AG04450 (cell line): ENCODE measurements at regions of chr3 and their contacts with region 1.

Region 1: DNA sequence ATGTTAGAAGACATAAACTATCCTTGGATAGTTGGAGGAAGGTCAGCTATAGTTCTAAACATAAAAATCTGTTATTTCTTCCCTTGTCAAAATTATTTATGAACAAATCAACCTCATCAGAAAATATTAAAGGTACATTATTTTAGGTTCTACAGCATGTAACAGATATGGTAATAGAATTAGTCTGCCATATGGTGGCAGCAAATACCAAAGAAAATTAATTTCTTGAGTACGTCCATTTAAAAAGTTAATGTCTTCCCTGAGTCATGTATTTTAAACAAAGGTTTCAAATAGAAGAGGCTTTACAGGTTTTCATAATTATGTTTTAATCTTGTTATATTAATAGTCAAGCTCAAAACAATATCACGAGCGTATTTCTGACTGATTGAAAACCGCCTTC is 17.9 kb upstream of the ANKRD28 start:
- DNase-seq: peak; percentile 54
- H3K4me3 ChIP-seq: no peak overlapping the region
- H3K27ac ChIP-seq: no peak overlapping the region
- H3K27me3 ChIP-seq: no peaks in the 10 kb centered on the region
- CTCF ChIP-seq: peak; percentile 54

Region 2: DNA sequence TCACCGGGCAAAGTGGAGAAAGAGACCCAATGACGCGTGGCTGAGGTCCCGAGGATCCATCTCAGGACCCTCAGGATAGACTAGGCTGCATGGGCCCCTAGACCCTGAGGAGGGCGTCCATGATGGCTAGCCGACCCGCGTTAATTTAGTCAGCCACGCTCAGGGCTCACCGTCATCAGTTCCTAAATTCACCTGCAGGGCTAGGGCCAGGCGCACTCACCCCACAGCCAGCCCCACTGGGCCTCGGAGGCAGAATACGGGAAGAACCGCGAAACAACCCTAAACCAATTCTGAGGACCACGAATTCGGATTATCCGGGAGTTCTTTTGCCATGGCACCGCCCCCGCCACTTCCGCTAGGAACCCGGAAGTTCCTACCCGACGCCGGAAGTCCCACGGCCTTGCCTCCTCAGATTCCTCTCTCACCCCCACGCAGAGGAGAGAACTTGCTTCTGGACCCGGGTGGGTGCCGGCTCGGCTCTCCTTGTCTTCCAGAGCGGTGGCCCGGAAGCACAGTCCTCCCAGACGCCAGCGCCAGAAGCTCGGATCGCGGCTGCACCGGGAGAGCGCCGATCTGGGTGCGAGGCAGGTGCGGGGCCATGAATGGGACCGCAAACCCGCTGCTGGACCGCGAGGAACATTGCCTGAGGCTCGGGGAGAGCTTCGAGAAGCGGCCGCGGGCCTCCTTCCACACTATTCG is 388.4 kb before region 1 on chr3 and contains the starts of genes EAF1 and METTL6:
- CTCF ChIA-PET with region 1: no interaction called
- POLR2A ChIA-PET with region 1: no interaction called
- DNase-seq: peak; percentile 37
- H3K4me3 ChIP-seq: peak within 1 kb of the TSS; percentile 95
- H3K27ac ChIP-seq: peak within 1 kb of the TSS; percentile 73
- H3K27me3 ChIP-seq: no peaks in the 10 kb centered on the region
- CTCF ChIP-seq: peak; percentile 32
- polyA plus RNA-seq, gene EAF1: 9.7 and 11.0 TPM in 2 replicates
- polyA plus RNA-seq, gene METTL6: 23.0 and 25.9 TPM in 2 replicates

Region 3: DNA sequence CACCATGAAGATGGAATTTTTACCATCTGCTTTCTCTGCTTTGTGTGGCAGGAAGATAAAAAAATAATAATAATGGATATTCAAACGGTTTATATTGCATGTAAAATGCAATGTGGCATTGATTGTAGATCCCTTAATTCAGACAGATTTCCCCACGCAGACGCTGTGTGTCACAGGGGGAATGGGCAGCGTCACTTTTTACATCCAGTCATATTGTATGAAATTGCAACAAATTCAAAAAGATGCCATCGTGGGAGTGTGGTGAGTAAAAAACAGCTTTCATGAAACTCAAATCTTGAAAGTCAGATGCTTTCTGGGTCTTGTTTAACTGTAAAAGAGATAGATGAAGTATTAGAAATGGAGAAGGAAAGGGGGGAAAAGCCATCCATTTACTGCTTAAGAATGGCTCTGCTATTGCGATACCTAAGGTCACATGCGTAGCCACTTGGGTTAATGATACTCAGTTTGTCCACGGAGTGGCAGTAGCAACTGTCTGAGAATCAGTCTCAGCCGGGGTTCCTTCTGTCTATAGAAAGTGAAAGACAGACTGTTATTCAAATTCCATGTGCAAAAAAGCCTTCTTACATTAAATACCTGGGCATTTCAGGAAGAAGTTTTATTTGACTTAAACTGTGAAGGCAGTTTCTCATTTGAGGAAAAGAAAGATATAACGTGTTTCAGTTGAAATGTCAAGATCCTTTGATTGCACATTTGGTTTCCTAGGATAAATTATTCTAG is 185.7 kb before region 1 on chr3:
- CTCF ChIA-PET with region 1: interaction called, 75 read pairs
- POLR2A ChIA-PET with region 1: no interaction called
- DNase-seq: no peak
- H3K4me3 ChIP-seq: peak overlapping the region; percentile 50
- H3K27ac ChIP-seq: no peak overlapping the region
- H3K27me3 ChIP-seq: no peaks in the 10 kb centered on the region
- CTCF ChIP-seq: peak; percentile 65

Region 4: GRCh38 chr3:15797642-15798303 is 17.9 kb before region 1 on chr3 and contains the start of gene ANKRD28:
- CTCF ChIA-PET with region 1: interaction called, 17 read pairs
- POLR2A ChIA-PET with region 1: no interaction called
- DNase-seq: peak; percentile 92
- H3K4me3 ChIP-seq: peak within 1 kb of the TSS; percentile 71
- H3K27ac ChIP-seq: peak within 1 kb of the TSS; percentile 96
- H3K27me3 ChIP-seq: no peaks in the 10 kb centered on the region
- CTCF ChIP-seq: peak; percentile 42
- polyA plus RNA-seq, gene ANKRD28: 114 and 134 TPM in 2 replicates

Region 5: DNA sequence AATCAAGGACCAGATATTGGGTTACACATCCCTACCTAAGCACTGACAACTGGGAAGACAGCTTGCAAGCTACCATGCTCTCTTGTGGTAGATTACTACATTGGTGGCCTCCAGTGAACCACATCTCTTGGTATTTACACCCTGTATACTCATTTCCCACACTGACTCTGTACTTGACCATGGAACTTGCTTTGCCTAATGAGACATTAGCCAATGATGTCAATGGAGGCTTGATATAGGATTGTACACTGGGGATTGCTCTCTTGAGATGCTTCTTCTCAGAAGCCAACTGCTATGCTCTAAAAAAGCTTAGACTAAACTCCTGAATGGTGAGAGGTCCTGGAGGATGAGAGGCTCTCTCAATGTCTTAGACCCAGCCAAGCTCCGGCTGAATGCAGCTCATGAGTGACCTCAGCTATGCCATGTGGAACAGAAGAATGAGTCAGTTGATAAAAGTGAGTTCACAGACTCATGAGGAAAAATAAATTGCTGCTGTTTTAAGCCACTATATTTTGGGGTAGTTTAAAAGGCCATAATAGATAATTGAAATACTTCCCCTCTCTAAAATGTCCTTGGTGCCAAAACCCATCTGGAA is 297.3 kb after region 1 on chr3:
- CTCF ChIA-PET with region 1: no interaction called
- POLR2A ChIA-PET with region 1: no interaction called
- DNase-seq: no peak
- H3K4me3 ChIP-seq: no peak overlapping the region
- H3K27ac ChIP-seq: peak overlapping the region; percentile 63
- H3K27me3 ChIP-seq: no peaks in the 10 kb centered on the region
- CTCF ChIP-seq: no peak

Region 6: GRCh38 chr3:16247276-16248061 is 431.8 kb after region 1 on chr3:
- CTCF ChIA-PET with region 1: interaction called, 24 read pairs
- POLR2A ChIA-PET with region 1: interaction called, 4 read pairs
- DNase-seq: peak; percentile 71
- H3K4me3 ChIP-seq: no peak overlapping the region
- H3K27ac ChIP-seq: no peak overlapping the region
- H3K27me3 ChIP-seq: no peaks in the 10 kb centered on the region
- CTCF ChIP-seq: peak; percentile 93